Psoas muscle (tissue), 8 donors: ENCODE measurements at regions of chr15 and their contacts with region 1.

Region 1: DNA sequence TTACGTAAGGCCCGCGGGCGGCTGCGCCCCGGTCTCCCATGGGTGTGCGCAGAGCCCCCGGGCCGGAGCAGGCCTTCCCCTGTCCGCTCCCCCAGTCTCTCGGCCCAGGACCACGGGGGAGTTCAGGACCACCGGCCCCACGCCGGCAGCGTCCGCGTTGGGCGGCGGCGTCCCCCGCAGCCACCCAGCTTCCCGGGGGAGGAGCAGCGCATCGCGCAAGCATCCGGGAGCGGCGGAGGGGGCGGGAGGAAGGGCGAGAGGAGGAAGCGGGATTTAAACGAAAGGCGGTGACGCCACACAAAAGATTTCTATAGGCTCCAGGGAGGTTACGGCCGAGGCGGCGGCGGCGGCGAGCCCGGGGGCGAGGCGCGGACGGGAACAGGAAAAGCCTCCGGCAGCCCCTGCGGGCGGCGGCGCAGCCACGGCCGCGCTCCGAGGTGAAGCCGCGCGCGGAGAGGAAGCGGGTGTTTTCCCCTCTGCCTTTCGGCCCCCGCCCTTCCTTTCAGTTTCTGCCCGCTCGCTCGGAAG is at the start of gene TLNRD1:
- DNase-seq: peak; percentile 88 to 90
- ATAC-seq: peak; percentile 57 to 77 (median 64)
- H3K4me3 ChIP-seq: peak within 1 kb of the TSS; percentile 84
- H3K27ac ChIP-seq: peak within 1 kb of the TSS; percentile 80
- H3K4me1 ChIP-seq: peaks cover 3% of the 10 kb centered on the region
- H3K27me3 ChIP-seq: peaks cover 0 to 55% (median 13%) of the 10 kb centered on the region in 3 donors
- CTCF ChIP-seq: no peak
- total RNA-seq, gene TLNRD1: 2.4 to 4.4 (median 2.7) TPM

Region 2: DNA sequence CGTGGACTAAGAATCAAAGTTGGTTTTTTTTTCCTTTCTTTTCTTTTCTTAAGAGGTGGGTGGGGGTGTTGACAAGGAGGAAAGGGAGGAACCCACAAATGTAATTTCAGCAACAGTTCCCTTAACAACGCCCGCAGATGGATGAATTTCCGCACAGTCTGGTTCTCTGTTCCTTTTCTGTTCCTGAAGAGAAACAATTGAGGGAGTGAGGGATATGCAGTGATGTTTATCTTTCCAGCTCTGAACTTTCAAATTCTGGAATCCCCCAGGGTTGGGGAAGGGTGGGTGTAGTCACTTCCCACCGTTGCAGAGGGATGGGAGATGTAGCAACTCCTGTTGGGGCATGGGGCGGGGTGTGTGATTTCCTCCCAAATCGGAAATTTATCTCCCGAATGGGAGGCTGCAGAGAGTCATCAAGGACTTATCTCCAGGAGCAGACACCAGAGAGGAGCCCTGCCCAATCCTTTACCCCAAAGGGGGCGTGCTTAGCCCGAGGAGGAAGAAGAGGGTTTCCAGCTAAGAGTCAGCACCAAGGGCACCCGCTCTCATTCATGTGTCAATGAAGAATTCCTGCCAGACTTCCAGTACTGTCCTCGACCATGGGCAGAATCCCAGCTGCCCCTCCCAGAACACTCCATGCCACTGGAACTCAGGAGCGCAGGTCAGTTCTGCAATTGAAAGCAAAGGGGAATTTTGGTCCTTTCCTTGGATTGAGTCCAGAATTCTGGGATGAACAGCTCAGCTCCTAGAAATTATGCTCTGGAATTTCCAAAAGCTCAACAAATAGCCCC is 98.4 kb after region 1 on chr15:
- intact Hi-C with region 1: loop called in 1 of 2 experiments (anchors 5 kb)
- DNase-seq: peak; percentile 23 to 51
- ATAC-seq: peak in 3 of 4 donors; percentile 31 to 54 (median 42)
- H3K4me3 ChIP-seq: no peak overlapping the region
- H3K27ac ChIP-seq: no peak overlapping the region
- H3K4me1 ChIP-seq: peaks cover 6% of the 10 kb centered on the region
- H3K27me3 ChIP-seq: peaks cover 0 to 4% (median 0%) of the 10 kb centered on the region in 3 donors
- CTCF ChIP-seq: no peak

Region 3: DNA sequence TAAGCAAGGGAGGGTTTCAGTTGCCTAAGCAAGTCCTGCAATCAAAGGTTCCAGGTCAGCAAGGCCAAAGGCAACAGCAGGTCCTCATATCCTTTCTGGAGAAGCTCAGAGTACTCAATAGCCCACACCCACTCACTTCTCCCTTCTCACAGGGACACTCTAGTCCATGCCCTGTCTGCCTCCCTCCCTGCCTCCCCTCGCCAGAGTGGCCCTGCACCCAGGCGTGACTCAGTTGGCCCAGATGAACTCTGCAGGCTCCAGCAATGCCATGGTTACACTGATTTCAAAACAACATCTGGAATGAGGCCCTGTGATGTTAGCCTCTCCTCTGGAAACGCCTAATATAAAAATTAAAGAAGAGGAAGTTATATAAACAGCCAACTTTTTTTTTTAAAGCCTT is 228.9 kb after region 1 on chr15:
- intact Hi-C with region 1: no loop called
- DNase-seq: peak; percentile 79 to 84
- ATAC-seq: peak in 3 of 4 donors; percentile 63 to 81 (median 79)
- H3K4me3 ChIP-seq: no peak overlapping the region
- H3K27ac ChIP-seq: no peak overlapping the region
- H3K4me1 ChIP-seq: peaks cover 5% of the 10 kb centered on the region
- H3K27me3 ChIP-seq: peaks cover 0 to 3% (median 0%) of the 10 kb centered on the region in 3 donors
- CTCF ChIP-seq: no peak